GM12878 (cell line): ENCODE measurements at regions of chr1 and their contacts with region 1.

Region 1: GRCh38 chr1:238951809-238952208 is 434.6 kb upstream of the CHRM3 start:
- DNase-seq: no peak
- ATAC-seq: peak; percentile 67
- H3K4me3 ChIP-seq: no peak overlapping the region
- H3K27ac ChIP-seq: no peak overlapping the region
- H3K4me1 ChIP-seq: no peaks in the 10 kb centered on the region
- H3K27me3 ChIP-seq: no peaks in the 10 kb centered on the region
- CTCF ChIP-seq: no peak; a peak in 1 of 6 replicates
- EP300 ChIP-seq: no peak
- POLR2A ChIP-seq: no peak
- RAD21 ChIP-seq: peak; percentile 30; the same call in 1 of the 2 replicates

Region 2: GRCh38 chr1:238252033-238252802 is 699.6 kb before region 1 on chr1:
- CTCF ChIA-PET with region 1: interaction called, 3 read pairs
- POLR2A ChIA-PET with region 1: no interaction called
- RAD21 ChIA-PET with region 1: no interaction called
- SMC1A ChIA-PET with region 1: no interaction called
- in situ Hi-C with region 1: no loop called
- intact Hi-C with region 1: loop called (anchors 2 kb)
- DNase-seq: no peak
- ATAC-seq: peak; percentile 97
- H3K4me3 ChIP-seq: no peak overlapping the region
- H3K27ac ChIP-seq: no peak overlapping the region
- H3K4me1 ChIP-seq: no peaks in the 10 kb centered on the region
- H3K27me3 ChIP-seq: no peaks in the 10 kb centered on the region
- CTCF ChIP-seq: peak; percentile 30 to 56 (median 53); a peak in 5 of 6 replicates
- EP300 ChIP-seq: no peak
- POLR2A ChIP-seq: no peak
- RAD21 ChIP-seq: peak; percentile 50

Region 3: GRCh38 chr1:239040523-239040922 is 88.7 kb after region 1 on chr1:
- CTCF ChIA-PET with region 1: no interaction called
- POLR2A ChIA-PET with region 1: no interaction called
- RAD21 ChIA-PET with region 1: no interaction called
- SMC1A ChIA-PET with region 1: no interaction called
- in situ Hi-C with region 1: no loop called
- intact Hi-C with region 1: no loop called
- DNase-seq: no peak
- ATAC-seq: no peak
- H3K4me3 ChIP-seq: no peak overlapping the region
- H3K27ac ChIP-seq: no peak overlapping the region
- H3K4me1 ChIP-seq: no peaks in the 10 kb centered on the region
- H3K27me3 ChIP-seq: no peaks in the 10 kb centered on the region
- CTCF ChIP-seq: no peak
- EP300 ChIP-seq: no peak
- POLR2A ChIP-seq: no peak
- RAD21 ChIP-seq: no peak